Heart left ventricle (tissue), 16 donors: ENCODE measurements at regions of chr21 and their contacts with region 1.

Region 1: GRCh38 chr21:27759091-27759659 is 792.3 kb upstream of the ADAMTS5 start:
- DNase-seq: peak in 4 of 5 donors; percentile 23 to 60 (median 43)
- ATAC-seq: peak; percentile 61 to 86 (median 72)
- H3K4me3 ChIP-seq: no peak overlapping the region
- H3K27ac ChIP-seq: no peak overlapping the region
- H3K4me1 ChIP-seq: peaks cover 0 to 16% (median 0%) of the 10 kb centered on the region in 12 donors
- H3K27me3 ChIP-seq: no peaks in the 10 kb centered on the region
- CTCF ChIP-seq: peak; percentile 16 to 64 (median 46)
- POLR2A ChIP-seq: no peak

Region 2: GRCh38 chr21:27802816-27803475 is 43.8 kb after region 1 on chr21:
- intact Hi-C with region 1: loop called in 1 of 10 experiments (anchors 10 kb)
- DNase-seq: peak in 1 of 5 donors; percentile 9
- ATAC-seq: no peak
- H3K4me3 ChIP-seq: no peak overlapping the region
- H3K27ac ChIP-seq: no peak overlapping the region
- H3K4me1 ChIP-seq: peaks cover 0 to 12% (median 0%) of the 10 kb centered on the region in 12 donors
- H3K27me3 ChIP-seq: no peaks in the 10 kb centered on the region
- CTCF ChIP-seq: peak; percentile 31 to 71 (median 54)
- POLR2A ChIP-seq: no peak